WTC11 (cell line): ENCODE measurements at regions of chr9 and their contacts with region 1.

Region 1: GRCh38 chr9:1009101-1009707 is 32.7 kb downstream of the DMRT3 start:
- DNase-seq: peak; percentile 89
- ATAC-seq: peak; percentile 94
- H3K4me3 Mint-ChIP-seq: no peak overlapping the region
- H3K27ac Mint-ChIP-seq: no peak overlapping the region
- H3K4me1 Mint-ChIP-seq: peaks cover 15% of the 10 kb centered on the region
- H3K27me3 Mint-ChIP-seq: peaks cover 20% of the 10 kb centered on the region
- CTCF ChIP-seq: peak; percentile 98

Region 2: GRCh38 chr9:899440-900184 is 109.6 kb before region 1 on chr9:
- CTCF ChIA-PET with region 1: interaction called, 37 read pairs
- POLR2A ChIA-PET with region 1: no interaction called
- DNase-seq: no peak
- ATAC-seq: peak; percentile 78
- H3K4me3 Mint-ChIP-seq: no peak overlapping the region
- H3K27ac Mint-ChIP-seq: no peak overlapping the region
- H3K4me1 Mint-ChIP-seq: peaks cover 36% of the 10 kb centered on the region
- H3K27me3 Mint-ChIP-seq: peaks cover 2% of the 10 kb centered on the region; the same call in 1 of the 2 replicates
- CTCF ChIP-seq: no peak

Region 3: DNA sequence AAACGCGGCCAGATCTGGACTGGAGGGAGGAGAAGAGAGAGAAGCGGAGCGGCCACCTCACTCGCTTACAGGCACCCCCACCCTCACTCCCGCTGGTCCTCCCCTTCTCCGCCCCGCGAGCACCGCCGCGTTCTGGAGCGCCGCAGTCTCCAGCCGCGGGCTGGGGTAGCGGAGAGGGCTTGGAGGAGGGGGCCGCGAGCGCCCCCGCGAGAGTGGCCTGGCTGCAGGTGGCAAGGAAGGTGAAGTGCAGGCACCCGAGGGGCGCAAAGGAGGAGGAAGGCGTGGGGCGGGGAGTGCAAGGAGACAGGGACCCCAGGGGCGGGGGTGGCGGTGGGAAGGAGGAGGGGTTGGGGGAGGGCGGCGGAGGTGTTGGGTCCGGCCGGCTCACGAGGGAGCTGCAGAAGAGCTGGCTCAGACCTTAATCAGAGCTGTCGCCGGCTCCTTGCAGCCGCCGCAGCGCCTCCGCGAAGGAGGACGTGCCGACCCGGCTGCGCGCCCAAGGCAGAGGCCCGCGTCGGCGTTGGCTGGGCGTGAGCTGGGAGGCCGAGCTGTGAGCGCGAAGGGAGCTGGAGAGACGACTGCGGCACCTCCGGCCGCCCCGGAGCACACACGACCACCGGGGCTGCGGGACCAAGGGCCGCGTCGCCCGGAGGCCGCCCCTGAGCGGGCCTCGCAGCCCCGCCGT is 32.8 kb before region 1 on chr9 and contains the start of gene DMRT3:
- CTCF ChIA-PET with region 1: interaction called, 17 read pairs
- POLR2A ChIA-PET with region 1: no interaction called
- DNase-seq: peak; percentile 79
- ATAC-seq: peak; percentile 14
- H3K4me3 Mint-ChIP-seq: peak within 1 kb of the TSS; percentile 61
- H3K27ac Mint-ChIP-seq: no peak within 1 kb of the TSS
- H3K4me1 Mint-ChIP-seq: peaks cover 53% of the 10 kb centered on the region
- H3K27me3 Mint-ChIP-seq: peaks cover 98% of the 10 kb centered on the region
- CTCF ChIP-seq: no peak
- total RNA-seq, gene DMRT3: not detected in 3 replicates

Region 4: GRCh38 chr9:1042466-1042865 is 33.3 kb after region 1 on chr9:
- CTCF ChIA-PET with region 1: interaction called, 14 read pairs
- POLR2A ChIA-PET with region 1: no interaction called
- DNase-seq: peak; percentile 80
- ATAC-seq: peak; percentile 58
- H3K4me3 Mint-ChIP-seq: peak overlapping the region; percentile 70
- H3K27ac Mint-ChIP-seq: no peak overlapping the region
- H3K4me1 Mint-ChIP-seq: peaks cover 33% of the 10 kb centered on the region
- H3K27me3 Mint-ChIP-seq: peaks cover 100% of the 10 kb centered on the region
- CTCF ChIP-seq: peak; percentile 61